Right lobe of liver (tissue), 6 donors: ENCODE measurements at regions of chr2 and their contacts with region 1.

Region 1: GRCh38 chr2:27249891-27250651 is 12.8 kb downstream of the SLC30A3 start:
- DNase-seq: peak in 2 of 3 donors; percentile 61 to 63
- ATAC-seq: peak; percentile 79 to 91 (median 84)
- H3K4me3 ChIP-seq: no peak overlapping the region
- H3K27ac ChIP-seq: no peak overlapping the region
- H3K4me1 ChIP-seq: no peaks in the 10 kb centered on the region
- H3K27me3 ChIP-seq: no peaks in the 10 kb centered on the region
- CTCF ChIP-seq: peak; percentile 55 to 75 (median 64)
- POLR2A ChIP-seq: no peak

Region 2: DNA sequence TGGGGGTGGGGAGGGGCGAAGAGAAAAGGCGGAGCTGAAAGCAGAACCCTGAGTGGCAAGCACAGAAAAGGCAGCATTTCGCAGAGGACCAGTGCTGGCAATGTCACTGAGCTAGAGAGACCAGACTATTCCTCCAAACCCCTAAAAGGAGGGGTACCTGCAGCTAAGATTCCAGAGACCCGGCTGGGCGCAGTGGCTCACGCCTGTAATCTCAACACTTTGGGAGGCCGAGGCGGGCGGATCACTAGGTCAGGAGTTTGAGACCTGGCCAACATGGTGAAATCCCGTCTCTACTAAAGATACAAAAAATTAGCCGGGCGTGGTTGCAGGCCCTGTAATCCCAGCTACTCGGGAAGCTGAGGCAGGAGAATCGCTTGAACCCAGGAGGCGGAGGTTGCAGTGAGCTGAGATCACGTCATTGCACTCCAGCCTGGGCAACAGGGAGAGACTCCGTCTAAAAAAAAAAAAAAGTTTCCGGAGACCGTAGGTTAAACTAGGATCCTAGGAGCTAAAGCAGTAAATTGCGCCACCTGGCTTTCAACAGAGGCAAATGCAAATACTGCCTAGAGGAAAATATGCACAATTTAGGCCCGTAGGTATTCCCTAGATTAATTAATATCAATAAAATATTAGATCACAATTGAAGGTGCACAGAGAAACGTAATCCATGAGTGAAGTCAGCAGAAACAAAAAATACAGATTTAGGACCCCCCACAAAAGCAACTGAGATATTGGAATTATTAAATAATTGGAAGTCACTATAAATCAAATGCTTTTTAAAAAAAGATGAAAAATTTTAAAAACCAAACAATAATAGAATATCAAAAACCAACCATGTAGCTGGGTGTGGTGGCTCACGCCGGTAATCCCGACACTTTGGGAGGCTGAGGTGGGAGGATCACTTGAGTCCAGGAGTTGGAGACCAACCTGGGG is 53.3 kb after region 1 on chr2:
- intact Hi-C with region 1: loop called in 1 of 2 experiments (anchors 10 kb)
- DNase-seq: peak in 2 of 3 donors; percentile 36 to 59
- ATAC-seq: peak; percentile 85 to 94 (median 86)
- H3K4me3 ChIP-seq: peak overlapping the region; percentile 26 to 51 (median 35)
- H3K27ac ChIP-seq: peak overlapping the region; percentile 33 to 55 (median 45)
- H3K4me1 ChIP-seq: peaks cover 0 to 20% (median 2%) of the 10 kb centered on the region in 4 donors
- H3K27me3 ChIP-seq: no peaks in the 10 kb centered on the region
- CTCF ChIP-seq: peak; percentile 84 to 92 (median 88)
- POLR2A ChIP-seq: no peak

Region 3: DNA sequence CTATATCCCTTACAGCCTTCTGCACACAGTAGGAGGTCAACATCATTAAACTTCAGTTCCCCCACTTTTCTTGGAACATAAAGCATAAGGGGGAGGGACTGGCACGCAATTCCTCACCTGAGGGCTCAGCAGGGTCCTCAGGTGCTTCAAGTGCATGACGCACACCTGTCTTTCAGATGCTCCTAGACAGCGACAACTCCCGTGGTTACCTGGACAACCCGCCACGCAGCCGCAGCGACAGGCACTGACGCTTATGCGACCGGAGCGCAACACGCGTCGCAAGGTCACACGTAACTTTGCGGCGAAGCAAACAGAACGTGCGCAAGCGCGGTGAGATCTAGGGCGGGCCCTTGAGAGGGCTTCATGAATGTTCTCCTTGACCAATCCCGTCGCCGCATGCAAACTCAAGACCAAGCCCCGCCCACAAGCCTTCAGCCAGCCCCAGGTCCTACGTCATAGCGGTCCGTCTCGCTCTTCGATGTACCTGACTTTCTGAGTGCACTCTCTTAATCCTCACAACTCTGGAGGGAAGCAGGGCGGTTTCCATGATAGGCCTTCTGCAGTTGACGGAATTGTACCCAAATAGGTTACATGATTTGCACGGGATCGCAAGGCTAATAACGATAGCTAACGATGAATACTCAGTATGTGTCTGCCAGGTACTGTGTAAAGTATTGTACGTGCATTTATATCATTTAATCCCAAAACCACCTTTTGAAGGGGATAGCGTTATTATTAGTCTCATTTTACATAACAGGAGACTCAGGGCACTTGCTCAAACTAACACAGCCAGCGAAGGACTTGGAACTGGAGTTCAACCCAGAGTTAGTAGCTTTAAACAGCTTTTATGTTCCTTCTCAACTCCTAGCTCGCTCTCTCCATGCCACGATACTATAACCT is 239.7 kb after region 1 on chr2 and contains the start of gene IFT172:
- intact Hi-C with region 1: no loop called
- DNase-seq: peak; percentile 99 to 100 (median 100)
- ATAC-seq: peak; percentile 88 to 94 (median 93)
- H3K4me3 ChIP-seq: peak within 1 kb of the TSS; percentile 41 to 48 (median 44)
- H3K27ac ChIP-seq: peak within 1 kb of the TSS; percentile 46 to 93 (median 88)
- H3K4me1 ChIP-seq: peaks cover 0 to 20% (median 8%) of the 10 kb centered on the region in 4 donors
- H3K27me3 ChIP-seq: no peaks in the 10 kb centered on the region
- CTCF ChIP-seq: no peak
- POLR2A ChIP-seq: peak; percentile 82
- total RNA-seq, gene IFT172: 4.4 to 11.5 (median 6.2) TPM